Motor neuron (in vitro differentiated cells): ENCODE measurements at regions of chr16 and their contacts with region 1.

Region 1: DNA sequence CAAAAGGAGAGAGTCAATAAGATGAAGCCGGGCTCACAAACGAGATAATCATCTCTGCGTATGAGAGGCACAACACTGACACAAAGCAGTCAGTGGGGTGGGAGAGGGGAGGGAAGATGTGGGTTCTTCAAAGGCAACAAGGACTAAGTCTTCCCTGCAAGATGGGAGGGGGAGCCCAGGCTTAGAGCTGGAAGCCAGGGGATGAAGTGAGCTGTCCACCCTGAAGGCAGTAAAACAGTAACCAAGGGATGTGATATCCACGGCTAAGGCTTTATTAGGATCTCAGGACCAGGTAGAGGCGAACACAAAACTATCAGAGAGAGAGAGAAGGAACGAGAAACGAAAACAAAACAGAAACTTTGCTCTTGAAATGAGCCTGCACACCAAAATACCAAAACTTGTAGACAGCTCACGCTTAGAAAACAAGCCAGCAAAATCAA is 115.9 kb downstream of the DYNLRB2 start:
- ATAC-seq: peak in 1 of 8 experiments; percentile 28
- H3K4me3 ChIP-seq: no peak overlapping the region
- H3K27ac ChIP-seq: no peak overlapping the region
- H3K4me1 ChIP-seq: no peaks in the 10 kb centered on the region

Region 2: GRCh38 chr16:80488167-80488566 is 168.6 kb before region 1 on chr16:
- in situ Hi-C with region 1: no loop called
- ATAC-seq: peak in 3 of 8 experiments; percentile 40 to 76 (median 65)
- H3K4me3 ChIP-seq: no peak overlapping the region
- H3K27ac ChIP-seq: no peak overlapping the region
- H3K4me1 ChIP-seq: no peaks in the 10 kb centered on the region

Region 3: DNA sequence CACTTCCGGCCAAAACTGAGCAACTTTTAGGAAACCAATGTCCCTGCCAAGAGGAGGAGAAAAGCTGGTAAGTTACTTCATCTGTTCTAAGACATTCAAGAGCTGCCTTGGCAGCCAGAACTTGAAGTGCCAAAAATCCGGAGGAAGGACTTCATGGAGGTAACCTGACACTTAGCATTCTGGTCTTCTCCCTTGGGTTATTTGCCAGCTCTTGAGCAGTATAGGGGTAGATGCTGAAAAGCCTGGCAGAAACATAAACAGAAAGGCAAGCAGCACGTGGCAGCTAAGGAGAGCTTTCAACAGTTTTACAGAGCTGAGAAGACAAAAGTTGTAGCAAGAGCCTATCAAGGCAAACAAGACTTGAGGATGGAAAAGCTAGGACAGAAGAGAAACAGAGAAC is 94.5 kb after region 1 on chr16:
- in situ Hi-C with region 1: loop called in 1 of 9 experiments (anchors 25 kb)
- ATAC-seq: peak in 2 of 8 experiments; percentile 45 to 78
- H3K4me3 ChIP-seq: no peak overlapping the region
- H3K27ac ChIP-seq: no peak overlapping the region
- H3K4me1 ChIP-seq: no peaks in the 10 kb centered on the region